Activated CD4-positive, alpha-beta T cell treated with anti-CD3 and anti-CD28 coated beads for 36 hours (primary cell): ENCODE measurements at regions of chr17 and their contacts with region 1.

Region 1: DNA sequence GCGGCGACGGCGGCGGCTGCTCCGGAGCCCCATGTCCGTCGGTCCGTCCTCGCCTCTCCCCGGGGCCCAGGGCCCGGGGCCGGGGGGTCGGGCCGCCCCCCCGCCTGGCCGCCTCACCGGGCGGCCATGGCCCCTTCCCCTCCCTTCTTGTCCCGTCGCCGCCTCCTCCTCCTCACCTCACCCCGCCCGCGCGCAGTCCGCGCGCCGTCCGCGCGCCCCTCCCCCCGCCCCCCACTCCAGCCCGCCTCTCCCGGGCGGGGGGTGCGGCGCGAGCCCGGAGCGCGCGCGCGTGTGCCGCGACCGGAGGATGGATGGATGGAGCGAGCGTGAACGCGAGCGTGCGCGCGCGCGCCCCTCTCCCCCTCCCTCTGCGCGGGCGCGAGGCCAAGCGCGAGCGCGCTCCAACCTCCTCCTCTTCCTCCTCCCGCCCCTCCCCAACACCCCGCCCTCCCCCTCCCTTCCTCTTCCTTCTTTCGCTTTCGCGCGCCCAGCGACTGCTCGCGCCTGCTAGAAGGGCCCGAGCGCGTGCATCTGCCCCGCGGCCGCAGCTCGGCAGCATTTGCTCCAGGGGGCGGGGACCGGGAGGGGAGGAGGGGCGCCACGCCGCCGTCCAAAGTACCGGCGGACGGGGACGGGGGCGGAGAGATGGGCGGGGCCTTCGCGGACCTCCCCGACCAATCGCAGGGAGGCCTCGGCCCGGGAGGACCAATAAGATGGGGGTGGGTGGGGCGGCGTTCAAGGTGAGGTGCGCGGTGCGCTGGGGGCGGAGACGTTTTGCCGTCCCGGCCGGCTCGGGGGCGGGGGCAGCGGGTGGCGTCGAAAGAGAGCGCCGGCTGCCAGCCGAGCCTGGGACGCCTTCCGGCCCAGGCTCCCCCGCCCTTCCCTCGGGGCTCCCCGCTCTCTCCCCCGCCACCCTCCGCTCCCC is at the start of gene ATXN7L3:
- DNase-seq: peak; percentile 100
- ATAC-seq: peak; percentile 84
- H3K4me3 Mint-ChIP-seq: peak within 1 kb of the TSS; percentile 88
- H3K27ac Mint-ChIP-seq: peak within 1 kb of the TSS; percentile 94
- H3K4me1 Mint-ChIP-seq: peaks cover 38% of the 10 kb centered on the region
- H3K27me3 Mint-ChIP-seq: no peaks in the 10 kb centered on the region
- total RNA-seq, gene ATXN7L3: 66.3 to 70.6 TPM

Region 2: DNA sequence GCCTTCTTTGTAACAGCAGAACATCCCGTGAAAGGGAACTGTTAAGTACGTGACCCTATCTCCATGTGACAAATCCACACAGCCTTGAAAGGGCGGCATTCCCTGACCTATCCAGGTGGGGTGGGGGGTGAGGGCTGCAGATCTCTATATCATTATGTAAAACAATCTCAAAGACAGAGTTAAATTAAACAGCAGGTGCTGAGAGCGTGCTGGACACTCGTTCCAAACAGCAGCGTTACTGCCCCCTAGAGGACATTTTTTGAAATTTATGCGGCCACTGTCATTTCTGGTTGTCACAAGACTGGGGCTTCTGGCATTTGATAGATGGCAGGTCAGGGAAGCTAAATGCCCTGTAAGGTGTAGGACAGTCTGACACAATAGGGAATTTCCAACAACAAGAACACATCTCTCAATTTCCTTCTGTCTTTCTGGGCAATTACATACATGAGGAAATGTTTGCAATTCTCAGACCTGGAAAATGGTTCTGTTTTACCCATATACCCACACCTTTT is 131.5 kb after region 1 on chr17:
- CTCF ChIA-PET with region 1: interaction called, 14 read pairs
- POLR2A ChIA-PET with region 1: no interaction called
- intact Hi-C with region 1: loop called in 1 of 2 experiments (anchors 5 kb)
- DNase-seq: peak; percentile 82
- ATAC-seq: peak; percentile 64
- H3K4me3 Mint-ChIP-seq: no peak overlapping the region
- H3K27ac Mint-ChIP-seq: no peak overlapping the region
- H3K4me1 Mint-ChIP-seq: peaks cover 12% of the 10 kb centered on the region
- H3K27me3 Mint-ChIP-seq: no peaks in the 10 kb centered on the region

Region 3: DNA sequence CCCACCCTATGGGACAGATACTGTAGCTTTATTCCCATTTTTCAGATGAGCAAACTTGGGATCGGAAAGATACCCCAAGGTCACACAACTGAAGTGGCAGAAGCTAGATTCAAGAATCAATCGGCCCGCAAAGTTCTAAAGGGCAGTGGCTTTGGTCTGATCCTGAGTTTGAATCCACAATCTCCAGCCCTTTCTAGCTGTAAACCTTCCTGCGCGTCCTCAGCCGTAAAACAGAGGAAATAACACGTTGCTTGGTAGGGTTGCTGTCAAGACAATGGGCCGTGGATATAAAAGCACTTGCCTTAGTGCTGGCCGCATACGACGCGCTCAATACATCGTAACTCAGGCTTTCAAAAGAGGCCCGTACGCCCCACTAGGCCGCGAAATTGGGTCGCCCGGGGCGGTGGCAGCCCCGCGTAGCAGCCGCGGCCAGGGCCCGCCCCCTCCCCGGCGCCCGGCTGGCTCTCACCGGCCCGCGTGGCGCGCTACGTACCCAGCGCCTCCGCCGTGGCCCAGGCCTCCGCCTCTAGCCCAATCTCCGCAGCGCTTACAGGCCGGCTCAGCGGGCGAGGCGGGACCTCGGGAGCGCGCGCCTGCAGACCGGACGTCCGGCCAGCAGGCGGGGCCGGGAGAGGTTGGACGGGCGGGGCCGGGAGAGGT is 851.4 kb after region 1 on chr17 and contains the start of gene DCAKD:
- CTCF ChIA-PET with region 1: no interaction called
- POLR2A ChIA-PET with region 1: no interaction called
- intact Hi-C with region 1: loop called in 1 of 2 experiments (anchors 5 kb)
- DNase-seq: peak; percentile 96
- ATAC-seq: peak; percentile 97
- H3K4me3 Mint-ChIP-seq: peak within 1 kb of the TSS; percentile 87
- H3K27ac Mint-ChIP-seq: peak within 1 kb of the TSS; percentile 95
- H3K4me1 Mint-ChIP-seq: peaks cover 50% of the 10 kb centered on the region
- H3K27me3 Mint-ChIP-seq: no peaks in the 10 kb centered on the region
- total RNA-seq, gene DCAKD: 34.8 to 36.2 TPM